Activated T-helper 2 cell treated with anti-CD3 and anti-CD28 coated beads, Interferon-gamma antibody, Interleukin-2, Interleukin-4, amounts not matched to agents 10 μg/mL and 5 μg/mL and 100 μg/mL, durations not matched to agents 14 hours and 24 hours and 36 hours (primary cell): ENCODE measurements at regions of chr10 and their contacts with region 1.

Region 1: GRCh38 chr10:95758351-95759025 is 2.5 kb downstream of the ENTPD1 start:
- DNase-seq: no peak
- H3K4me3 Mint-ChIP-seq: peak overlapping the region; percentile 54
- H3K27ac Mint-ChIP-seq: peak overlapping the region; percentile 82
- H3K4me1 Mint-ChIP-seq: peaks cover 49% of the 10 kb centered on the region
- H3K27me3 Mint-ChIP-seq: peaks cover 12% of the 10 kb centered on the region

Region 2: DNA sequence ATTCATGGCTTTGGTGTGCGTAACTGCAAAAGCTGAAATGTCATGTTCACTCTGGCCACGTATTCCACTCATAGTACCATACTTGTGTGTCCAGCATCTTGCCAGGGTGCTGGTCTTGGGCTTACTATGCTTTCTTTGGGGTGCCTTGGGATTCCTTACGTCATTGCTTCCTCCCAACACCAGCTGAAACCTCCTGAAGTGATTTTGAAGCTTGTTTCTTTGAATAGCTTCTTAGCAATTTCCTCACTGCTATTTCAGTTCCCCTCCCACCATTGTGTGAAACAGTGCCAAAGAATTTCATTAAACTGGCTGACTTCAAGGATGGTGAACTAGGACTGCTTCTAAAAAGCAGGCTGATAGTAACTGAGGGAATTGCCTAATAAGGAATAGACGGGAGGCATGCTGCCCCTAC is 34.4 kb after region 1 on chr10:
- intact Hi-C with region 1: loop called (anchors 1 kb)
- DNase-seq: no peak
- H3K4me3 Mint-ChIP-seq: no peak overlapping the region
- H3K27ac Mint-ChIP-seq: peak overlapping the region; percentile 89
- H3K4me1 Mint-ChIP-seq: peaks cover 71% of the 10 kb centered on the region
- H3K27me3 Mint-ChIP-seq: no peaks in the 10 kb centered on the region

Region 3: GRCh38 chr10:95818668-95819067 is 60.2 kb after region 1 on chr10:
- intact Hi-C with region 1: loop called (anchors 1 kb)
- DNase-seq: no peak
- H3K4me3 Mint-ChIP-seq: no peak overlapping the region
- H3K27ac Mint-ChIP-seq: peak overlapping the region; percentile 2
- H3K4me1 Mint-ChIP-seq: peaks cover 41% of the 10 kb centered on the region
- H3K27me3 Mint-ChIP-seq: peaks cover 4% of the 10 kb centered on the region

Region 4: DNA sequence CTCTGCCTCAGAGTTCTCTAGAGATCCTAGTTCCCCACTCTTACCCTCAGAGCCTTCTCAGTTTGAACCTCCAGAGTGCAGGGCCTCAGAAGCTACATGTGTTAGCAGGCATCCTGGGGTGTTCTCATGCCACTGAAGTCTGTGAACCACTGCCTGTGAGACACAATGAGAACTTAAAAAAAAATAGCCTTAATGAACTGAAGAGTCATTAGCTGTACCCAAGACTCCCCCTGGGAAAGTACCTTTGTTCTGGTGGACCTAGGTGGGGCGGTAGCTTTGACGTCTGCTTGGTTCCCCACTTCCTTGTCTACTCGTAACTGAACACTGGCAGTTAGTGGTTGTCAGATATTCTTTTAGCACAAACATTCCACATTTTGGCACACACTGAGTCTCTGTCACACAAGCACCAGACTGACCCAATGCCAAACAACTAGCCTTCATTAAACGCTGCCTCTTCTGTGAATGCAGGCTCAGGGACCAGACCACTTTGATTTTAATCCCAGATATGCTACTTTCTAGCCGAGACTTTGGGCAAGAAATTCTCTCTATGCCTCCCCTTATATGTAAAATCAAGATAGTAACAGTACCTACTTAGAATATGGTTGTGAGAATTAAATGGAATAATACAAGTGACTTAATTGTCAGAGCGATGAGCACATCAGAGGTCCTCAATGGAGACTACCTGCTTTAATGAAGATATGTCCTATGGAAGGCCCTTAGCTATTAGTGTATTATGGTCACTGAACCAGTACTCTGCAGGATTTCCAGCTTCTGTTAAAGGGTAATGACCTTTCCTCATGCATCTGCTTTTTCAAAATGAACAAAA is 73.9 kb after region 1 on chr10:
- intact Hi-C with region 1: loop called (anchors 1 kb)
- DNase-seq: peak; percentile 71
- H3K4me3 Mint-ChIP-seq: peak overlapping the region; percentile 87
- H3K27ac Mint-ChIP-seq: peak overlapping the region; percentile 98
- H3K4me1 Mint-ChIP-seq: peaks cover 64% of the 10 kb centered on the region
- H3K27me3 Mint-ChIP-seq: no peaks in the 10 kb centered on the region

Region 5: GRCh38 chr10:95841661-95842498 is 83.4 kb after region 1 on chr10:
- intact Hi-C with region 1: loop called (anchors 1 kb)
- DNase-seq: no peak
- H3K4me3 Mint-ChIP-seq: no peak overlapping the region
- H3K27ac Mint-ChIP-seq: peak overlapping the region; percentile 89
- H3K4me1 Mint-ChIP-seq: peaks cover 56% of the 10 kb centered on the region
- H3K27me3 Mint-ChIP-seq: peaks cover 2% of the 10 kb centered on the region

Region 6: DNA sequence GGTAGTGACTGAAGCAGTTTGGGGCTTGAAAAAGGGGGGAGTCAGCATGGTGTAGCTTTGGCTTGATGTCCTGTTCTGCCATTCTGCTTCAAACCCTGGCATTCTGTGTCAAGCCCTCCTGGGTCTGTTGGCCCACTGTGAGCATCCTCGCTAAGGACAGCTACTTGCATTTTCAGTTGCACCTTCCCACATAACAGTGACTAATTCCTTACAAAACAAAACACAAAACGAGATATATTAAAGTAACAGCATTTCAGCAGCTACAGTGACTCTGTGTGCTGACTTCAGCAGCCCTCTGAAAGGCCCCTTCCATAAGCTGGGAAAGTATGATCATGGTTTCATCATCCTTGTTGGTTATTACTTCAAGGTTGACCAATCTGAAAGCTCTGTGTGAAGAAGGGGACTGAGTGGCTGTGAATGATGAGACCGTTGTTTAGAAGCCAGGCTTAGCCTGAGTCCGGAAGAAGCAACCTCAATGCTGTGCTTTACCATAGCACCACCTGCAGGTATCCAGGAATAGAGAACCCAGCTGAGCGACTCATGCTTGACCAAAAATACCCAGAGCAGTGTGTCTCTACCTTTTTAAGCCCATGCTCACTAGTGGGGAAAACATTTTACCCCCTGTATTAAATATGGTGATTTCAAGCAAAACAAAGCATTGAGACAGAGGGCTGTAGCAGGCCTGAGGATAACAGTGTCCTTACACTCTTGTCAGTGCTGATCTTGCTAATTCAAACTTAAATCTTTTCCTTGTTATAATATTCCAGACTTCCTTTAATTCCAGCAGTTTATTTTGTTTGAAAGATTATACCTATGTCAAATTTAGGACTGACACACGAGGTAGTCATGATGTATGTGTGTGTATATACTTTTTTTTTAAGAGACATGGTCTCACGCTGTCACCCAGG is 106.7 kb after region 1 on chr10:
- intact Hi-C with region 1: loop called (anchors 1 kb)
- DNase-seq: peak; percentile 59
- H3K4me3 Mint-ChIP-seq: peak overlapping the region; percentile 5
- H3K27ac Mint-ChIP-seq: peak overlapping the region; percentile 82
- H3K4me1 Mint-ChIP-seq: peaks cover 56% of the 10 kb centered on the region
- H3K27me3 Mint-ChIP-seq: no peaks in the 10 kb centered on the region

Region 7: DNA sequence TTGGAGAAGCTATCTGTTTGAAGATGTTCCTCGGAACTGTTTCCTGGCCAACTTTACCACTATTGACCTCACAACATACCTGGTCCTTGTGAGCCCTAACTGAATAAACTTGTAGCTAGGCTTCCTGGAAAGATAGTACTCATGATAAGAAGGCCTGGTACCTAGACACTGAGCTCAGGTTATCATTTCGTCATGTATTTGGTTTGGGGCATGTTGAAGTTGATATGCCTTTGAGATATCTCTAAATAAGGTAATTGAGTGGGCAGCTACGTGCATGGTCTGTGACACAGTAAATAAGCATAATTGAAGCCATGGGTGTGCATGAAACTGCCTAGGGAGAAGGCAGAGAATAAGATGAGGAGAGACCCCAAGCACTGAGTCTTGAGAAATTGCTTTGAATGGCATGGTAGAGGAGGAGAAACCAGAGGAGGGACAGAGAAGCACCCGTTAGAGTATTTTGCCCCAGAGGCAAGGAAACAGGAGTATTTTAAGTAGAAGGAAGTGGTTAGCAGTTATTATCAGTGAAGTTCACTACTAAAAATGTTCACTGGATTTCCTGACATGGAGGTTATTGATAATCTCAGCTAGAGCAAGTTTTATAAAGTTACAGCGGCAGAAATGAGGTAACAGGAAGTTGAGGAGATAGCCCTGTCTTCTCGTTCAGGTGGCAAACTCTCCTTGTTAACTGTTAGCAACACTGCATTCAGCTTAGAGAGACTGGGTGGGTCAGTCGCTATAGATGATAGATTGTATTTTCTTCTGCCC is 204.9 kb after region 1 on chr10:
- intact Hi-C with region 1: loop called (anchors 1 kb)
- DNase-seq: peak; percentile 15
- H3K4me3 Mint-ChIP-seq: peak overlapping the region; percentile 75
- H3K27ac Mint-ChIP-seq: peak overlapping the region; percentile 99
- H3K4me1 Mint-ChIP-seq: peaks cover 32% of the 10 kb centered on the region
- H3K27me3 Mint-ChIP-seq: no peaks in the 10 kb centered on the region